Posterior vena cava (tissue), 2 donors: ENCODE measurements at regions of chr19 and their contacts with region 1.

Region 1: GRCh38 chr19:7340959-7341837 is 7.5 kb upstream of the ARHGEF18 start:
- DNase-seq: peak; percentile 94

Region 2: DNA sequence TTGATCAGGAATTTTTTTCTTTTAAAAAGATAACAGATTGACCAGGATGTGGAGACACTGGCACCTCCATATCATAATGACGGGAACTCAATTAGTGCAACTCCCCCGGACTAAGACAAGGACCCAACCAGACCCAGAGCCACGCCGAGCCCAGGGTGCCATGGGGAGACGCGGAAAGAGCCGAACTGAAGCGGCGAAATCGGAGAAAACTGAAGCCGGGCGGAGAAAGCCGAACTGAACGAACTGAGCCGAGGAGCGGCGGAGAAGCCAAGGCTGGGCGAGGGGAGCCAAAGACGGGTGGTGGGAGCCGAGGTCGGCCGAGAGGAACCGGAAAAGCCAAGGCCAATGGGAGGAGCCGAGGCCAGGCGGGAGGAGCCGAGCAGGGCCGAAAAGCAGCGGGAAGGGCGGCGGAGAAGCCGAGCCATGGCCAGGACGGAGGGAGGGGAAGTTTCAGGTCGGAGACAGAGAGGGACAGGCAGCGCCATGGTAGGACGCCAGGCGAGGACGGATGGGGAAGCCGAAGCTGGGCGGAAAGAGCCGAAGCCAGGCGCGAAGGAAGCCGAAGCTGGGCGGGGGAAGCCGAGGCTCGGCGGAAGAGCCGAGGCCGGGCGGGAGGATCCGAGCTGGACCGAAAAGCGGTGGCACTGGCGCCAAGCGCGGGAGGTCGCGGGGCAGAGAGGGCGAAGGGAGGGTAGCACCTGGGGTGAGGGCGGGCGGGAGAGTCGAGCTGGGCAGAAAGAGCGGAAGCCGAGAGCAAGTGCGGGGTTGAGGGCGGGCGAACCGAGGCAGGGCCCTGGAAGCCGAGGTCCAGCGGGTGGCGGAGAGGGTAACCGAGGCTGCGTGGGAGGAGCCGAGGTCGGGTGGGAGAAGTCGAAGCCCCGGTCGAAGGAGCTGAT is 242.2 kb before region 1 on chr19:
- intact Hi-C with region 1: loop called (anchors 2 to 5 kb)
- DNase-seq: peak; percentile 98

Region 3: DNA sequence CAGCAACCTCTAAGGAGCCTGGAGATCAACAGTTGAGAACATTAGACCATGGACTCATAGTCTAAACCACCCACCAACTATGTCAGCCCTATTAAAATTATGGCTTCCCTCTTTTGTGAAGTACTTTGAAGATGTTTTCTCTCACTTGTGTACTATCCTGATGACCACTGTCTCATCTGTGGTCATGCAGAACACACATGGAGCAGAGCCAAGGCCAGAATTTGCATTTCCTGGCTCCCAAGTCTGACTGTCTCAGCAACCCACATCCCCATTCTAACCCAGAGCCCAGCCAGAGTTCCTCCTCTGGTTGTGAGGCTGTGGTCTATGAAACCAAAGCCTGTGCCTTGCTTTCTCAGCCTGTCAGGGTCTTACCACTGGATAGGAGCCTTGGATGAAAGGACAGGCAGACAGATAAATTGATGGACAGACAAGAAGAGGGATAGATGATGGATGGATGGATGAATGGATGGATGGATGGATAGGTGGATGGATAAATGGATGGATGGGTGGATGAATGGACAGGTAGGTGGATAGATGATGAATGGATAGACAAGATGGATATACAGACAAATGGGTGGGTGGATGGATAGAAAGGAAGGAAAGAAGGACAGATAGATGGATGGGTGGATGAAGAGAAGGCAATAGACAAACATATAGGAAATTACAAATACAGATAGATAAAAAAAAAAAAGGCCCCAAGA is 236.3 kb before region 1 on chr19:
- intact Hi-C with region 1: loop called (anchors 2 to 5 kb)
- DNase-seq: no peak

Region 4: DNA sequence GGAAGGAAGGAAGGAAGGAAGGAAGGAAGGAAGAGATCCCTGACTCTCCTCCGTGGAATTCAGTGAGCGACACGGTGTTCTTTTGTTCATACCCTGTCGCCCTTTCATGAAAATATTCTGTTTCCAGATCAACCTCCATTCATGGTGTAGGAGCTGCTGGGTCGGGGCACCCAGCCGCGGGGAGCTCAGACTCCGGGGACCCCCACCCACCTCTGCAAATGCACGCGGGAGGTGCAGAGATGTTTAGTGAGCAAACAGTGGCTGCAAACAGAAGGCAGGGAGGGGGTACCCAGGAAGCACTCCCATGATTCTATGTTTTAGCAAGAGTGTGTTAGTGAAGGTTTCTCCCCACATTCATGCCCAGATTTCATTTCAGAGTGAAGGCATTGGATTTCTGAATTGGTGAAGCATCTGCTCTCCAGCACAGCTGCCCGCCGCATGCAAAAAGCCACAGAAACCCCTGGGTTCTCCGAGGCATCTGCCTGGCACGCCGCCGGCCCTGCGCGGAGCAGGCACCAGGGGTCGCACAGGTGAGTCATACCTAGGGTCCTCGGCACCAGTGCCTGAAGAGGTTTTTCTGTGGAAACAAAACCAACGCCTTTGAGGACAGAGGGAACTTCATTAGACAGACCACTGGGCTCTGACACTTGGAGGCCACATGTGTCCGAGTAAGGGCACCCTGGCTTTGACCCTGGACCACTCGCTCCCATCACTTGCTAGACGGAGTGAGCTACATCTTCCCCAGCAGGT is 191.1 kb before region 1 on chr19:
- intact Hi-C with region 1: loop called in 1 of 2 experiments (anchors 2 kb)
- DNase-seq: no peak

Region 5: DNA sequence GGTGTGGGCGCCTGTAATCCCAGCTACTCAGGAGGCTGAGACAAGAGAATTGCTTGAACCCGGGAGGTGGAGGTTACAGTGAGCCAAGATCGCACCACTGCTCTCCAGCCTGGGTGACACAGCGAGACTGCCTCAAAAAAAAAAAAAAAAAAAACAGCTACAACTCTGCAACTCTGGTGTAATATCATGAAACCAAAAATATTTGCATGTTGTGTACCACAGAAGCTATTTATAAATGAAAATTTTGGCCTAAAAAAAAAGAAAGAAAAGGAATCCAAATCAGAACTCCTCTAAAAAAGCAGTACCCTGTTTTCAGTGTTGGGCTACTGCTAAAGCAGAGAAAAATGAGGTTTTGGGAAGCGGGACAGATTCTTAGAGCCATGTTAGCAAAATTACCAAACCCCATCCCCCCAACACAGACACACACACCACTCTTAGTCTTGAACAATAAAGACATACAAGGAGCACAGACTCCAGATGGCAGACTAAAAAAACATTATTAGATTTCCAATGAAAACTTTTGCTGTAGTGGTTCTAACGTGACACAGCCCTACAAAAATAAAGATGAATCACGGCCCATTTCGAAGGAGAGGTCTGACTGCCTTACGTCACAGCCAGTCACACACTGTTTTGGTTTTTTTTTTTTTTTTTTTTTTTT is 98.5 kb before region 1 on chr19:
- intact Hi-C with region 1: no loop called
- DNase-seq: no peak

Region 6: GRCh38 chr19:7304200-7304599 is 37.0 kb before region 1 on chr19:
- intact Hi-C with region 1: no loop called
- DNase-seq: no peak

Region 7: GRCh38 chr19:7415163-7415858 is 74.1 kb after region 1 on chr19:
- intact Hi-C with region 1: no loop called
- DNase-seq: no peak